ENCODE measurements at regions of chr2 and their contacts with region 1.

Region 1: GRCh38 chr2:197705121-197705911 is at the start of gene MARS2:
- H3K4me3 Mint-ChIP-seq: peak within 1 kb of the TSS; percentile 88
- H3K27ac Mint-ChIP-seq: peak within 1 kb of the TSS; percentile 84
- H3K4me1 Mint-ChIP-seq: peaks cover 40% of the 10 kb centered on the region
- H3K27me3 Mint-ChIP-seq: peaks cover 4% of the 10 kb centered on the region

Region 2: DNA sequence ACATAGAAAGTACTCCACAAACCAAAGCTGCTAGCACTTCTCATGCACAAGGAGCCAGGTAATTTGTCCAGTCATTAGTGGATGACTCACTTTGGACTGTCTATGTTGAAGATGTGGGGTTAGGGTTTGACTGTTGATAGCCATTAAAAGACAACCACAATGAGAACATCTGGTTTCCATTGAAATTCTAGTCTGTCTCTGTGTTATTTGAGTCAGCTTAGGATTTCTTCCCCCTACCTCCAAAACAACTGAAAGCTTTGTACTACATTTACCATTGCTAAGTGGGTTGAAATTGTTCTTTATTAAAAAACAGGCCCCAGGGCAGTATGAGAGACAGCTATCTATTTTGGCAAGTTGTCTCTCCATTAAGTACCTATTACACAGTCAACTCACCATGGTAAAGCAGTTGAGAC is 344.6 kb before region 1 on chr2:
- intact Hi-C with region 1: no loop called
- H3K4me3 Mint-ChIP-seq: no peak overlapping the region
- H3K27ac Mint-ChIP-seq: no peak overlapping the region
- H3K4me1 Mint-ChIP-seq: no peaks in the 10 kb centered on the region
- H3K27me3 Mint-ChIP-seq: no peaks in the 10 kb centered on the region

Region 3: GRCh38 chr2:197453161-197453914 is 252.0 kb before region 1 on chr2 and contains the start of gene COQ10B:
- intact Hi-C with region 1: loop called (anchors 10 kb)
- H3K4me3 Mint-ChIP-seq: peak within 1 kb of the TSS; percentile 96
- H3K27ac Mint-ChIP-seq: peak within 1 kb of the TSS; percentile 96
- H3K4me1 Mint-ChIP-seq: peaks cover 41% of the 10 kb centered on the region
- H3K27me3 Mint-ChIP-seq: no peaks in the 10 kb centered on the region

Region 4: GRCh38 chr2:197515739-197516392 is 189.4 kb before region 1 on chr2 and contains the start of gene MOB4:
- intact Hi-C with region 1: loop called (anchors 5 kb)
- H3K4me3 Mint-ChIP-seq: peak within 1 kb of the TSS; percentile 97
- H3K27ac Mint-ChIP-seq: peak within 1 kb of the TSS; percentile 94
- H3K4me1 Mint-ChIP-seq: peaks cover 19% of the 10 kb centered on the region
- H3K27me3 Mint-ChIP-seq: no peaks in the 10 kb centered on the region

Region 5: DNA sequence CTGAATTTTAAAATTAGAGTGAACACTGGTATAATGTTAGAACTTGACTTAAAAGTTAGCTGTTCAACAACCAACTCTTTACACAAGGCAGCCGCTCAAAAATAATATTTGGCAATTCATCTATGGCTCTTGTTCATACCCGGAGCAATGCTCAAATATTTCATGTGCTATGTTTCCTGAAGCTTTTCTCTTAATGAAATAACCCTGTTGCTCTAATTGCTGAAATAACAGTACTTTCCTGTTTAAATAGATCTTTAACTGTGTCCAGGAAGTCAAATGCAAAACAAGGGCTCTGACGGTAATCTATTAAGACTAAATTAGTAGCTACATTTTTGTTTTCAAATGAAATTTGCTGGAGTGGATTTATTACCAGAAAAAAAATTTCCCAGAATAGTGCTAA is 63.6 kb before region 1 on chr2:
- intact Hi-C with region 1: no loop called
- H3K4me3 Mint-ChIP-seq: no peak overlapping the region
- H3K27ac Mint-ChIP-seq: no peak overlapping the region
- H3K4me1 Mint-ChIP-seq: no peaks in the 10 kb centered on the region
- H3K27me3 Mint-ChIP-seq: no peaks in the 10 kb centered on the region

Region 6: DNA sequence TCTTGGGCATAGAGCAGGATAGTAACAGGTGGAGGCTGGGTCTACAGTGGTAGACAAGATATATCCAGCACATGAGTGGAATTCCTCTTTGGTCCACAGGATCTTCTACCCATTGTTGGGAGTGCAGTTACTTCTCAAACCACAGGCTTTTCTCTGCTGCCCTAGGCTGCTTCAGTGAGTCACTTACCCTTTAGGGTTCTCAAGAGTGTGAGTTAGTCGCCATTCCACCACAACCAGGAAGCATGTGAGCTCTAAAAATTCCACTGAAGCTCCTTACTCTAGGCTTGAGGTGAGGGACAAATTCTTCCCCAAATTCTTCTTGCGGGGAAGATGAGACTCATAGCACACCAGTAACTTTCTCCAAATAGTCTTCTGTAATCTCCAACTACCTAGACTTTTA is 288.5 kb after region 1 on chr2:
- intact Hi-C with region 1: no loop called
- H3K4me3 Mint-ChIP-seq: no peak overlapping the region
- H3K27ac Mint-ChIP-seq: no peak overlapping the region
- H3K4me1 Mint-ChIP-seq: peaks cover 23% of the 10 kb centered on the region
- H3K27me3 Mint-ChIP-seq: no peaks in the 10 kb centered on the region

Region 7: DNA sequence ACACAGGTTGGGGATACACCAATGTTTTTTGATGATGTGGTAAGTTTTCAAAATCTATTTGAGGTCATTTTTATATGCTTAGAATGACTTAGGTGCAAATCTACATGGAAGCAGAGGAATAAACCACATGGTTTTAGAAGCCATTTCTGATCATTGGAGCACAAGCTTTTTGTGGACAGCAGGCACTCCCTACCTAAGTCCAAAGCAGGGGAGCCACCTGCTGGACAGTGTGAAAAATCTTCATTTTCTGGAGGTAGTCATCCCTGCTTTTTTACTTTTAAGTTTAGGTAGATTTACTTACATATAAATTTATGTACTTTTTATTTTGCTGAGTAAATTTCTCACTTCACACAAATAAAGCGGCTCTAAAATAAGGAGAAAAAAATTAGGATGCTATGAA is 422.3 kb after region 1 on chr2:
- intact Hi-C with region 1: loop called (anchors 10 kb)
- H3K4me3 Mint-ChIP-seq: no peak overlapping the region
- H3K27ac Mint-ChIP-seq: no peak overlapping the region
- H3K4me1 Mint-ChIP-seq: peaks cover 26% of the 10 kb centered on the region
- H3K27me3 Mint-ChIP-seq: no peaks in the 10 kb centered on the region

Measured in dendritic cell treated with granulocyte-macrophage colony-stimulating factor and Interleukin-4, amounts not matched to agents 40 ng/mL and 50 ng/mL, for 4 days (primary cell).